IMR-90 (cell line): ENCODE measurements at regions of chr12 and their contacts with region 1.

Region 1: GRCh38 chr12:108950991-108951739 is 69.7 kb downstream of the SVOP start:
- DNase-seq: peak; percentile 54
- ATAC-seq: peak; percentile 37
- H3K4me3 ChIP-seq: no peak overlapping the region
- H3K27ac ChIP-seq: no peak overlapping the region
- H3K4me1 ChIP-seq: 0 out of 2 replicates have a peak, but pooled peaks cover 1% of the 10 kb centered on the region
- H3K27me3 ChIP-seq: peaks cover 6% of the 10 kb centered on the region
- CTCF ChIP-seq: peak; percentile 78
- POLR2A ChIP-seq: no peak
- RAD21 ChIP-seq: peak; percentile 85

Region 2: GRCh38 chr12:108562348-108563135 is 388.6 kb before region 1 on chr12 and contains the start of gene ISCU:
- CTCF ChIA-PET with region 1: no interaction called
- POLR2A ChIA-PET with region 1: no interaction called
- dilution Hi-C with region 1: no loop called
- in situ Hi-C with region 1: loop called (anchors 10 kb)
- intact Hi-C with region 1: loop called (anchors 1 kb)
- DNase-seq: peak; percentile 95
- ATAC-seq: peak; percentile 86
- H3K4me3 ChIP-seq: peak within 1 kb of the TSS; percentile 92
- H3K27ac ChIP-seq: peak within 1 kb of the TSS; percentile 89
- H3K4me1 ChIP-seq: no peaks in the 10 kb centered on the region
- H3K27me3 ChIP-seq: no peaks in the 10 kb centered on the region
- CTCF ChIP-seq: no peak
- POLR2A ChIP-seq: peak; percentile 88
- RAD21 ChIP-seq: no peak
- total RNA-seq, gene ISCU: 52.7 and 58.3 TPM in 2 replicates

Region 3: GRCh38 chr12:108570743-108571608 is 380.2 kb before region 1 on chr12:
- CTCF ChIA-PET with region 1: no interaction called
- POLR2A ChIA-PET with region 1: interaction called, 4 read pairs
- dilution Hi-C with region 1: no loop called
- in situ Hi-C with region 1: loop called (anchors 10 kb)
- intact Hi-C with region 1: loop called (anchors 2 kb)
- DNase-seq: peak; percentile 67
- ATAC-seq: peak; percentile 82
- H3K4me3 ChIP-seq: no peak overlapping the region
- H3K27ac ChIP-seq: no peak overlapping the region
- H3K4me1 ChIP-seq: no peaks in the 10 kb centered on the region
- H3K27me3 ChIP-seq: no peaks in the 10 kb centered on the region
- CTCF ChIP-seq: peak; percentile 66
- POLR2A ChIP-seq: no peak
- RAD21 ChIP-seq: peak; percentile 76

Region 4: GRCh38 chr12:108611884-108612415 is 339.2 kb before region 1 on chr12:
- CTCF ChIA-PET with region 1: no interaction called
- POLR2A ChIA-PET with region 1: no interaction called
- dilution Hi-C with region 1: no loop called
- in situ Hi-C with region 1: no loop called
- intact Hi-C with region 1: loop called (anchors 2 kb)
- DNase-seq: peak; percentile 89
- ATAC-seq: peak; percentile 55
- H3K4me3 ChIP-seq: no peak overlapping the region
- H3K27ac ChIP-seq: no peak overlapping the region
- H3K4me1 ChIP-seq: peaks cover 16% of the 10 kb centered on the region
- H3K27me3 ChIP-seq: no peaks in the 10 kb centered on the region
- CTCF ChIP-seq: peak; percentile 47
- POLR2A ChIP-seq: no peak
- RAD21 ChIP-seq: peak; percentile 39

Region 5: DNA sequence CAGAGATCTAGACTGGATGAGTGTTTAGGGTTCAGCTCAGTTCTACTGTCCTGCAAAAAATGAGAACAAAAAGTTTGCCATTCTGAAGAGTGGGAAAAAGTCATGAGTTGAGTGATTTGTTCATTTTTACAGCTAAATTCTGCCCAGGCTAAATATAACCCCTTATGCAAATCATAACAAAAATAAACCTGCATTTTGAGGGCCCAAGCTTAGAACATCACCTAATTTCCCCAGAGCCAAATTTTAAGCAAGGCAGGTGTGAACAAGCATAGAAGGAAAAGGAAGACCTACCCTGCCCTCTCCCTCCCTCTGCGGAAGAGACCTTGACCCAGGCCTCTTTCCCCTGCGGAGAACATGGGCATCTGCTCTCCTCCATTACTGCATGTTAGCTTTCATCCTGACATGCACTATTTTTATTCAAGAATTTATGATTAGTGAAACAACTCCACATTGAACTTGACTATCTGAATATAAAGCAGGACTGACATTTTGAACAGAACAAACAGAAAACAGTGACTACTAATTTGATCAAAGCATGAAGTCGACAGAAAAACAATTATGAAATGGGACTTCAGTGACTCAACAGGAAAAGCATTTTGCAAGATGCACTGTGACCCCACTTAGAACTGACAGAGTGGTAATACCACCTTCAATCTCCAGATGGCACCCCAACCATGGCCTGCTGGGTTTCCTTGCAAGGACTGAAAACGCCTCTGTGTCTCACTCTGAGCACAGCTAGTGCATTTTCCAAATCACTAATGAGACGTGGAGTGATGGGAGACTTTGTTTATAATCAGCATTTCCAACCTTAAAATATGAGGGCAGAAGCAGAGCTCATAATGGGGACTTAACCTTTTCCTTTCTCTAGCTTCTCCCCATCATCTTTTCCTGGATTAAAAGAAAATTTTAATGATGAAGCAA is 286.6 kb before region 1 on chr12:
- CTCF ChIA-PET with region 1: interaction called, 8 read pairs
- POLR2A ChIA-PET with region 1: no interaction called
- dilution Hi-C with region 1: no loop called
- in situ Hi-C with region 1: no loop called
- intact Hi-C with region 1: loop called (anchors 1 kb)
- DNase-seq: peak; percentile 95
- ATAC-seq: peak; percentile 92
- H3K4me3 ChIP-seq: no peak overlapping the region
- H3K27ac ChIP-seq: peak overlapping the region; percentile 85
- H3K4me1 ChIP-seq: peaks cover 30% of the 10 kb centered on the region
- H3K27me3 ChIP-seq: no peaks in the 10 kb centered on the region
- CTCF ChIP-seq: peak; percentile 98
- POLR2A ChIP-seq: peak; percentile 31; the same call in 1 of the 2 replicates
- RAD21 ChIP-seq: peak; percentile 99

Region 6: DNA sequence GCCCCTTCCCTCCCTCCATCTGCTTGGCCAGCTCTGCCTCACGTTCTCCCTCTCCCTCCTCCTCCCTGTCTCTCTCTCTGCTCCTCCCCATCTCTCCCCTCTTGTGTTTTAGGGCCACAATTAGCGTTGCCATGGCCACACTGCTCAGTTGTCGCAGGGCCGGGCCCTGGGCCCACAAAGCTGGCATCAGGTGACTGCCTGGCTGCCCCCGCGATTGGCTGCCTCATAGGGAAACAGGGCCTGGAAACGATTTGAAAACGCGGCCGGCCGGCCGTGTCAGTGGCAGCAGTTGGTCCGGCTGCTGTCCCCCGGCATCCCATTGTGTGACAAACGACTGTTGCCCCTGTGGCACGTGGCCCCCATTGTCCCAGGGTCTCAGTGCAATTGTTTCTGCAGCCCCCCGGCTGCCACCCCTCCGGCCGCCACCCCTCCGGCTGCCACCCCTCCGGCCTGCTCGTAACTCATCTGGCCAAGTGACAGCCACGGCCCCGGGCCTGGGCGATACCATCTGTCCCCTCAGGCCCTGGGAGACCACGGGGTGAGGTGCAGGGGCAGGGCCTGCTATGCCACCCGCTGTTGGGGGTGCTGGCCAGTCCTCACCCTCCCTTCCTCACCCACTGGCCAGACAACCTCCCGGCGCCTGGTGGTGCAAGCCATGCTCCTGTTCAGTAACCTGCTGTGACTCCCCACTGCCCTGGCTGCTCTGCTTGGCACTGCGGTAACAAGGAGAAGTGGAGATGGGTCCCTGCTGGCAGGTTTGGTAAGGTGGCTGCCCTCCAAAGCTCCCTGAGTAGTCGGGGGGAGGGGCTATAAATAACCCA is 340.6 kb after region 1 on chr12:
- CTCF ChIA-PET with region 1: no interaction called
- POLR2A ChIA-PET with region 1: no interaction called
- dilution Hi-C with region 1: no loop called
- in situ Hi-C with region 1: no loop called
- intact Hi-C with region 1: no loop called
- DNase-seq: no peak
- ATAC-seq: peak; percentile 68
- H3K4me3 ChIP-seq: no peak overlapping the region
- H3K27ac ChIP-seq: no peak overlapping the region
- H3K4me1 ChIP-seq: no peaks in the 10 kb centered on the region
- H3K27me3 ChIP-seq: peaks cover 11% of the 10 kb centered on the region; the same call in 1 of the 2 replicates
- CTCF ChIP-seq: no peak
- POLR2A ChIP-seq: no peak
- RAD21 ChIP-seq: no peak